Activated naive CD4-positive, alpha-beta T cell treated with anti-CD3 and anti-CD28 coated beads for 36 hours (primary cell): ENCODE measurements at regions of chr2 and their contacts with region 1.

Region 1: GRCh38 chr2:50529600-50530218 is 502.2 kb downstream of the NRXN1 start:
- DNase-seq: no peak
- H3K4me3 Mint-ChIP-seq: no peak overlapping the region
- H3K27ac Mint-ChIP-seq: no peak overlapping the region
- H3K4me1 Mint-ChIP-seq: no peaks in the 10 kb centered on the region
- H3K27me3 Mint-ChIP-seq: peaks cover 3% of the 10 kb centered on the region

Region 2: DNA sequence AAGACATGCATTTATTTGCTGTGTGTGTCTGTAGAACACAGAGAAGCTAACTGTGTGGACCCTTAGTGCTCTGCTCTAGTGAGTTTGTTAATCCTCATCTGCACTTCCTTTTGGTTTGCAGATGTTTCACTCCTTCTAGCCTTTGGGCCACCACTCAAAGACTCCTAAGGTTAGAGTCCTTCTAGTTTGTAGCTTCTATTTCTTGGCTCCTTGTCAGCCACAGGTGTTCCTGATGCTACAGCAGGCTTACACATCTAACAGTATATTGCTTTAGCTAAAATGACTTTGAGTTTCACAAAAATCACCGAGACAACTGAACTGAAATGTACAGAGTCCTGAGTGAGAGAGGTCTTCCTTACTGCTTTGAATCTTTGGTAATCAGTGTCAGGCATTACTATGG is 49.2 kb before region 1 on chr2:
- CTCF ChIA-PET with region 1: no interaction called
- intact Hi-C with region 1: no loop called
- DNase-seq: no peak
- H3K4me3 Mint-ChIP-seq: no peak overlapping the region
- H3K27ac Mint-ChIP-seq: no peak overlapping the region
- H3K4me1 Mint-ChIP-seq: no peaks in the 10 kb centered on the region
- H3K27me3 Mint-ChIP-seq: peaks cover 2% of the 10 kb centered on the region

Region 3: GRCh38 chr2:50863218-50863617 is 333.5 kb after region 1 on chr2:
- CTCF ChIA-PET with region 1: no interaction called
- intact Hi-C with region 1: no loop called
- DNase-seq: no peak
- H3K4me3 Mint-ChIP-seq: no peak overlapping the region
- H3K27ac Mint-ChIP-seq: no peak overlapping the region
- H3K4me1 Mint-ChIP-seq: no peaks in the 10 kb centered on the region
- H3K27me3 Mint-ChIP-seq: no peaks in the 10 kb centered on the region

Region 4: GRCh38 chr2:51706220-51706619 is 1176.5 kb after region 1 on chr2:
- CTCF ChIA-PET with region 1: no interaction called
- intact Hi-C with region 1: loop called (anchors 10 kb)
- DNase-seq: no peak
- H3K4me3 Mint-ChIP-seq: no peak overlapping the region
- H3K27ac Mint-ChIP-seq: no peak overlapping the region
- H3K4me1 Mint-ChIP-seq: no peaks in the 10 kb centered on the region
- H3K27me3 Mint-ChIP-seq: no peaks in the 10 kb centered on the region